Activated B cell treated with CpG ODN at 0.5 μM for 24 hours (primary cell): ENCODE measurements at regions of chr7 and their contacts with region 1.

Region 1: DNA sequence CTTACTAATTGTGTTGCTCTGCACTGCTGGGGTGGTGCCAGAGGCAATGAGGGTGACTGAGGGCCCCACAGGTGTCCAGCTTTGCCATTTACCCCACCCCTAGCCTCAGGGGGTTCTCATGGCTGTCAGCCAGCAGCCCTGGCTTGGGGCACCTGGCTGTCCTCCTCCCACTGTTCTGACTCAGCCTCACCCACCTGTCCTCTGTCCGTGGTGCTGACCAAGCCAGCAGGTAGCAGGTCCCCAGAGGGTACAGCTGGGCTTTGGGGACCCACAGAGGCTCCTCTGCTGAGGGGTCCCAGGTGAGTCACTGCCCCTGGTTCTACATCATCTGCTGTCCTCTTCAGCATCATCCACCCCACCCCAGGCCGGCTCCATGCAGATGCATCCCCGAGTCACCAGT is 32.2 kb upstream of the ZNF716 start:
- DNase-seq: no peak
- ATAC-seq: no peak
- H3K4me3 Mint-ChIP-seq: no peak overlapping the region
- H3K27ac Mint-ChIP-seq: no peak overlapping the region
- H3K4me1 Mint-ChIP-seq: no peaks in the 10 kb centered on the region
- H3K27me3 Mint-ChIP-seq: no peaks in the 10 kb centered on the region
- CTCF ChIP-seq: no peak

Region 2: DNA sequence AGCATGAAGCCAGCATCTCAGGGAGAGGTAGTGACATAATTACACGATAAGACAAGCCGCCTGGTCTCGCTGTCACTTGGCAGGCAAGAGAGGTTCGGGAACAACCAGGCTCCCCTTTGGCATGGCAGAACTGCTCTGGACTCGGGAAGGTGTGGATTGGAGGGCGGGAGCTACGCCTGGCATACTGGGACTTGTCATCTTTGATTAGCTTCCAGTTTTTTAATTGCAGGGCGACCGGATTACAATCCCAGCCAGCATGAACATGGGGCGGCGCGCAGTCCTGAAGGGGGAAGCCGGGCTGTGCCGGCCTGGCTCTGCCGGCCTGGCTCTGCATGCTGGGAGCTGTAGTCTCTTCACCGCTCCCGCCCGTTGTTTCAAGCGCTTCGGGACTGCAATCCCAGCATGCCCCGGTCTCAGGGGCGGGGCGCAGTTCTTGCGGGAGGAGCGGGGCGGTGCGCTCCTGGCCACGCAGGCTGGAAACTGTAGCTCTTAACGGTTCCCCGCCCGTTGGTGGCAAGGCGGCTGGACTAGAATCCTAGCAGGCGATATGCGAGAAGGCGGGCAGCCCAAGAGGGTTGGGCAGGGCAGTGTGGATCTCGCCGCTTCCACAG is 13.3 kb before region 1 on chr7:
- CTCF ChIA-PET with region 1: no interaction called
- POLR2A ChIA-PET with region 1: no interaction called
- intact Hi-C with region 1: loop called (anchors 1 kb)
- DNase-seq: no peak
- ATAC-seq: no peak
- H3K4me3 Mint-ChIP-seq: no peak overlapping the region
- H3K27ac Mint-ChIP-seq: no peak overlapping the region
- H3K4me1 Mint-ChIP-seq: no peaks in the 10 kb centered on the region
- H3K27me3 Mint-ChIP-seq: no peaks in the 10 kb centered on the region
- CTCF ChIP-seq: no peak